Activated CD4-positive, alpha-beta memory T cell treated with anti-CD3 and anti-CD28 coated beads for 36 hours (primary cell): ENCODE measurements at regions of chr15 and their contacts with region 1.

Region 1: GRCh38 chr15:78761891-78762385 is 49.3 kb downstream of the ADAMTS7 start:
- DNase-seq: no peak
- H3K4me3 Mint-ChIP-seq: no peak overlapping the region
- H3K27ac Mint-ChIP-seq: peak overlapping the region; percentile 83
- H3K4me1 Mint-ChIP-seq: peaks cover 22% of the 10 kb centered on the region
- H3K27me3 Mint-ChIP-seq: no peaks in the 10 kb centered on the region

Region 2: GRCh38 chr15:78790030-78790429 is 28.1 kb after region 1 on chr15:
- CTCF ChIA-PET with region 1: no interaction called
- POLR2A ChIA-PET with region 1: no interaction called
- intact Hi-C with region 1: loop called (anchors 1 kb)
- DNase-seq: peak; percentile 61
- H3K4me3 Mint-ChIP-seq: no peak overlapping the region
- H3K27ac Mint-ChIP-seq: peak overlapping the region; percentile 11
- H3K4me1 Mint-ChIP-seq: peaks cover 6% of the 10 kb centered on the region
- H3K27me3 Mint-ChIP-seq: no peaks in the 10 kb centered on the region

Region 3: GRCh38 chr15:78808550-78808949 is 46.6 kb after region 1 on chr15:
- CTCF ChIA-PET with region 1: interaction called, 3 read pairs
- POLR2A ChIA-PET with region 1: no interaction called
- intact Hi-C with region 1: loop called (anchors 1 kb)
- DNase-seq: peak; percentile 52
- H3K4me3 Mint-ChIP-seq: no peak overlapping the region
- H3K27ac Mint-ChIP-seq: no peak overlapping the region
- H3K4me1 Mint-ChIP-seq: peaks cover 10% of the 10 kb centered on the region
- H3K27me3 Mint-ChIP-seq: peaks cover 34% of the 10 kb centered on the region